ENCODE measurements at regions of chr10 and their contacts with region 1.

Region 1: GRCh38 chr10:97498076-97498840 is at the start of gene MMS19:
- DNase-seq: peak; percentile 97
- H3K4me3 ChIP-seq: peak within 1 kb of the TSS; percentile 81
- H3K27ac ChIP-seq: peak within 1 kb of the TSS; percentile 85
- H3K4me1 ChIP-seq: peaks cover 42% of the 10 kb centered on the region
- CTCF ChIP-seq: no peak
- total RNA-seq, gene MMS19: 74.4 and 95.7 TPM in 2 replicates

Region 2: GRCh38 chr10:97416565-97416964 is 81.7 kb before region 1 on chr10:
- CTCF ChIA-PET with region 1: no interaction called
- POLR2A ChIA-PET with region 1: no interaction called
- intact Hi-C with region 1: no loop called
- DNase-seq: peak; percentile 60
- H3K4me3 ChIP-seq: peak overlapping the region; percentile 6
- H3K27ac ChIP-seq: peak overlapping the region; percentile 36
- H3K4me1 ChIP-seq: peaks cover 29% of the 10 kb centered on the region
- CTCF ChIP-seq: no peak

Region 3: DNA sequence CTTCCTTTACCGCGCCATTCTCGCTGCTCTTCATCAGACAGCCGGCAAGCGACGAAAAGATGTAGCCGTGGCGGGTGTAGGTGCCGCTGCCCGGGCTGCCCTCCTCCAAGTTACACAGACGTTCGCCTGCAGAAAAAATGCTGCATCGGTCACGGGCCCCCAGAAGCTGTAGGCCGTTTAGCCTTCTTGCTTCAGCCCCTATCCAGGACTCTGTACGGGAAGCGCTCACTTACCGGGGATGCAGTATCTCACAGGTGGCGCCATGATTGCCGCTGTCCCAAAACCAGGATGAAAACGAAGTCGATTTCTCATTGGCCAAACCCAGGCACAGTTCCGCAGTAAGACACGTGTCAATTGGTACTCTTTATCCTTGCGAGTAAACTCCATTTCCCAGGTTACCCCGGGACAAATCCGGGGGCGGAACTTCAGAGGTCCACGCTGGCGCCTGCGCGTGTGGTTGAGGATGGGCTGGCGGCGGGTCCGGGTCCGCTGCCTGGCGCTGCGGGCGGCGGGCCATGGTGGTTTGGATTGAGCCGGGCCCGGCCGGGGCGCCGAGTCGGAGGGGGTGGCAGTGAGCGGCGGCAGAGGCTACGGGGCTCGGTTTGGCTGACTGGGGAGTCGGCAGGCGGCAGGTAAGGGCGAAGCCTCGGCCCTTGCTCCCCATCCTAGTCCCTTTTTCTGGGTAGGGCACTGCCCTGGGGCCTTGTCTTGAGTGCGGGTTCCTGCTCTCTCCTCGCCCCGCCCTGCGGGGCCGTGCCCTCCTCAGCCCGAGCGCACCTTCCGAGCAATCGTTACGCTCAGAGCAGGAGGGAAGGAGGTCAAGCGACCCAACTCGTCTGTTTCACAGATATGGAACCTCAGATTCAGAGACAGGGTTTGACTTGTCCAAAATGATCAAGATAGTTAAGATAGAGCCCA is 52.3 kb before region 1 on chr10 and contains the starts of genes EXOSC1 and ZDHHC16:
- CTCF ChIA-PET with region 1: no interaction called
- POLR2A ChIA-PET with region 1: no interaction called
- intact Hi-C with region 1: loop called (anchors 1 kb)
- DNase-seq: peak; percentile 96
- H3K4me3 ChIP-seq: peak within 1 kb of the TSS; percentile 89
- H3K27ac ChIP-seq: peak within 1 kb of the TSS; percentile 36
- H3K4me1 ChIP-seq: peaks cover 28% of the 10 kb centered on the region
- CTCF ChIP-seq: peak; percentile 38
- total RNA-seq, gene EXOSC1: 46.8 and 59.6 TPM in 2 replicates
- total RNA-seq, gene ZDHHC16: 28.7 and 31.0 TPM in 2 replicates

Region 4: DNA sequence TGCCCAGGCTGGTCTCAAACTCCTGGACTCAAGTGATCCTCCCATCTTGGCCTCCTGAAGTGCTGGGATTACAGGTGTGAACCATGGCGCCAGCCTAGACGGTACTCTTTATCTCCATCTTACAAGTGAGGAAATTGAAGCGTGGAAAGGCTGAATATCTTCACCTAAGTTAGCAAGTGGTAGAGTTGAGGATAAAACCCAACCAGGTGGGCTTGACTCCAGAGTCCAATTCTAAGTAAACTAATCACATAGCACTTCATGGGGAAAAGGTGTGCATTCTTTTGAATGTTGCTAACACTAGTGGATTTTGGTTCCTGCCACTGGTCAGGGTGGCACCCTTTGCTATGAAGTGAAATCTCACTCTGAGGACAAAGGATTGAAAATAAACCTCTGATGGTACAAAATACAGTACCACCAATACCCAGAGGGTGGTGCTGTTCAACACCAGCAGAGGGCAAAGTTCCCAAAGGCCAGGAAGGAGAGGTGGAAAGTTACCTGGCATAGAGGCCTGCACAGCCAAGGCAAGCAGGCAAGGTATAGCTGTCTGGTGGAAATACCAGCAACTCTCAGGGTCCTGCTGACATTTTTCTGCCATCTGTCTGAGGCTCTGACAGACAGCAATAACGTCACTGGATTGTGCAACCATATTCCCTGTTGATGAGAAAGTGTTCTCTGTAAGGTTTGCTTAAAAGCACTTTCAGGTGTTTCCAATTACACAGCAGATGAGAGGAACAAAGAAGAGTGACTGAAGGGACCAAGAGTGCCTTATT is 34.7 kb before region 1 on chr10:
- CTCF ChIA-PET with region 1: no interaction called
- POLR2A ChIA-PET with region 1: interaction called, 4 read pairs
- intact Hi-C with region 1: loop called (anchors 5 kb)
- DNase-seq: peak; percentile 56
- H3K4me3 ChIP-seq: no peak overlapping the region
- H3K27ac ChIP-seq: no peak overlapping the region
- H3K4me1 ChIP-seq: peaks cover 10% of the 10 kb centered on the region
- CTCF ChIP-seq: peak; percentile 97

Region 5: GRCh38 chr10:97509120-97509680 is 10.9 kb after region 1 on chr10:
- CTCF ChIA-PET with region 1: interaction called, 10 read pairs
- POLR2A ChIA-PET with region 1: no interaction called
- intact Hi-C with region 1: no loop called
- DNase-seq: no peak
- H3K4me3 ChIP-seq: no peak overlapping the region
- H3K27ac ChIP-seq: no peak overlapping the region
- H3K4me1 ChIP-seq: no peaks in the 10 kb centered on the region
- CTCF ChIP-seq: no peak